ENCODE measurements at regions of chr10 and their contacts with region 1.

Region 1: GRCh38 chr10:101968940-101969321 is 87.0 kb downstream of the ARMH3 start:
- DNase-seq: no peak
- ATAC-seq: no peak
- H3K4me3 ChIP-seq: no peak overlapping the region
- H3K27ac ChIP-seq: no peak overlapping the region
- H3K4me1 ChIP-seq: peaks cover 15% of the 10 kb centered on the region
- H3K27me3 ChIP-seq: no peaks in the 10 kb centered on the region
- CTCF ChIP-seq: no peak

Region 2: DNA sequence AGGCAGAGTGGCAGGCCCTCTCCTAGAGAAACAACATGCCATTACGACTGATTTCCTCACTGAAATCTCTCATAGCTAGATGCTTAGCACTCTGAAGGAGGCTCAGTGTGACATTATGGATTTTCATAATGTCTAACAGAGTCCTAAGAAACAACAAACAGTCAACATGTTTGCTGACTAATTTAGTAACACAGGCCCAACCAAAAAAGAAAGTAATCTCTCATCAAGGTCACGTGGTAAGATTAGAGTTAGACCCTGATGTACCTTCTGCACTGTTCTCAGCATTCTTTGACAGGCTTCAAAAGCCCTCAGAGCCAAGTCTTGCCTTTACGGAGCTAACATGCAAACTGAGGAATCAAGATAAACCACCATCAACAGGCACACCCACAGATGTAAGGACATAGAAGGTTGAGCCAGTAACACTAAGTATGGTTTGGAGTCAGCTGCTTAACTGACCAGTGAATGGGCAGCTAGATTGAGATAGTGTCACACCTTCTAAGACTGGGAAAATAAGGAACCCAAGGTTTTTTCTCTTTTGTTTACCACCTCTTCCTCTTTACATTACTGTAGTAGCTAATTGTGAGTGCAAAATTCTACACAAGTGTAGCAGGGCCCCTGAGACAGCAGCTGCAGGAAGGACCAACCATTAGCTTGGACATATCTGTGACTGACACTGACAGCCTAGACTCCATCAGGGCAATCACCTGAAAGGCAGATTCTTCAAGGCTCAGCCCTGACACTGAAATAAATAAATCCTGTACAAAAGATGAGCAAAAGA is 110.0 kb before region 1 on chr10:
- CTCF ChIA-PET with region 1: no interaction called
- POLR2A ChIA-PET with region 1: no interaction called
- intact Hi-C with region 1: no loop called
- DNase-seq: no peak
- ATAC-seq: no peak
- H3K4me3 ChIP-seq: no peak overlapping the region
- H3K27ac ChIP-seq: no peak overlapping the region
- H3K4me1 ChIP-seq: no peaks in the 10 kb centered on the region
- H3K27me3 ChIP-seq: no peaks in the 10 kb centered on the region
- CTCF ChIP-seq: no peak

Region 3: GRCh38 chr10:101897633-101898032 is 71.3 kb before region 1 on chr10:
- CTCF ChIA-PET with region 1: no interaction called
- POLR2A ChIA-PET with region 1: no interaction called
- intact Hi-C with region 1: loop called (anchors 5 kb)
- DNase-seq: peak; percentile 48
- ATAC-seq: peak; percentile 81
- H3K4me3 ChIP-seq: no peak overlapping the region
- H3K27ac ChIP-seq: no peak overlapping the region
- H3K4me1 ChIP-seq: peaks cover 10% of the 10 kb centered on the region
- H3K27me3 ChIP-seq: no peaks in the 10 kb centered on the region
- CTCF ChIP-seq: no peak

Region 4: DNA sequence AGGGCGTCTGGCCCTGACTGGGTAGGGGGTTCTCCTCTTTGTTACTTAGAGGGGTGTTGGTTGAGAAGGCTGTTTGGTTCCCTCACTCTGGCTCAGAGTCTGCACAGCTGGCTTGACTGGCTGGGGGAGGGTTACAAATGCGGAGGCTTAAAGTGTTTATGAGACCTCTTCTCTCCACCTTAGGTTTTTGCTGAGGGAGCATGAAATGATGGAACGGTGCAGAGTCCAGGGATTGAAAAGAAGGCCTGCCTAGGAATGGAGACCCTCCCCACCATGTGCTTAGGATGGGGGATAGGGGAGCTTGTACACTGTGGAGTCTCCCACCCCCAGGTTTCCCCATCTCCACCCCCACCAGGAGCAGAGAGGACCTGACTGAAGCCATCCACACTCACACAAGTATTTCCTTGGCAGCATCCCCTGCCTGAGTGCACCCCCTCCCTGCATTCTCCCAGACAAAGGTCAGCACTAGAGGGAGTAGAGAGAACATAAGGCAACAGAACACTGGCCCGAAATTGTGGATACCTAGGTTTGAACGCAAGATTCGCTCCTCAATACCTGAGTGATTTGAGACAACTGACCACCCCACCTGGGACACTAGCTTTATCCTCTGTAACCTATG is 152.9 kb after region 1 on chr10:
- CTCF ChIA-PET with region 1: no interaction called
- POLR2A ChIA-PET with region 1: no interaction called
- intact Hi-C with region 1: no loop called
- DNase-seq: no peak
- ATAC-seq: no peak
- H3K4me3 ChIP-seq: no peak overlapping the region
- H3K27ac ChIP-seq: no peak overlapping the region
- H3K4me1 ChIP-seq: peaks cover 21% of the 10 kb centered on the region
- H3K27me3 ChIP-seq: no peaks in the 10 kb centered on the region
- CTCF ChIP-seq: peak; percentile 14; the same call in 1 of the 2 replicates

Region 5: GRCh38 chr10:103648921-103649532 is 1680.1 kb after region 1 on chr10:
- CTCF ChIA-PET with region 1: no interaction called
- POLR2A ChIA-PET with region 1: no interaction called
- intact Hi-C with region 1: no loop called
- DNase-seq: no peak
- ATAC-seq: no peak
- H3K4me3 ChIP-seq: no peak overlapping the region
- H3K27ac ChIP-seq: no peak overlapping the region
- H3K4me1 ChIP-seq: no peaks in the 10 kb centered on the region; the same call in 1 of the 2 replicates
- H3K27me3 ChIP-seq: no peaks in the 10 kb centered on the region
- CTCF ChIP-seq: no peak